ENCODE measurements at regions of chr15 and their contacts with region 1.

Region 1: GRCh38 chr15:85485956-85486567 is 105.7 kb downstream of the AKAP13 start:
- DNase-seq: peak; percentile 75
- ATAC-seq: peak; percentile 88
- H3K4me3 ChIP-seq: no peak overlapping the region
- H3K27ac ChIP-seq: no peak overlapping the region
- H3K4me1 ChIP-seq: peaks cover 17% of the 10 kb centered on the region; the same call in 1 of the 2 replicates
- H3K27me3 ChIP-seq: no peaks in the 10 kb centered on the region
- CTCF ChIP-seq: peak; percentile 77
- EP300 ChIP-seq: no peak
- POLR2A ChIP-seq: no peak
- RAD21 ChIP-seq: peak; percentile 50; the same call in 1 of the 2 replicates

Region 2: DNA sequence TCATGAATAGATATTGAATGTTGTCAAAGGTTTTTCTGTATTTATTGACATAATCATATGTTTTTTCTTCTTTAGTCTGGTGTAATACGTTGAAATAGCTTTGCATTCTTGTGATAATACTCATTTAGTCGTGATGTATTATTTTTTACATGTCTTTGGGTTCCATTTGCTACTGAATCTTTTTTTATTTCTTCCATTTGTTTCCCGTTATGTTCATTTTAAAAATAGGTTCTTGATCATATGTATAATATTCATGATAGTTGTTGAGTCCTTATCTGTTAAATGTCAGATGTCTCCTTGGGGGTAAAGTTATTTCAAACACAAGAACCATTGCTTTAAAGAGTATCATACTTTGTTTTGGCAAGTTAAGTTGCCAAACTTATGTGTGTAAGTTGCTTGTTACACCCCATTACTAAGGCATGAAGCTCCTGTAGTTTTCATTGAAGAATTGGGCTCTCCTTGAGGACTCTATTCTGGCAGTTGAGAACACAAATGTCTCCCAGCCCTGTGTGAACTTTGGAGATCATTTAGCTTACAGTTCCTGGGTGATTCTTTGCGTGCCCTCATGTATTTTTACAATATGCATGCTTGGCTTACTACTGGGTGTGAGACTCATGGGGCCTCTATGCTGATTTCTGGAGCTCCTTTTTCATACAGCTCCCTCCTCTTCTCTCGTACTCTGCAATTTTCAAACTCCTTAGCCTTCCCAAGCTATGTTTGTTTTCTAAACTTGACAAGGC is 97.3 kb before region 1 on chr15:
- CTCF ChIA-PET with region 1: no interaction called
- POLR2A ChIA-PET with region 1: no interaction called
- in situ Hi-C with region 1: no loop called
- intact Hi-C with region 1: no loop called
- DNase-seq: no peak
- ATAC-seq: no peak
- H3K4me3 ChIP-seq: no peak overlapping the region
- H3K27ac ChIP-seq: no peak overlapping the region
- H3K4me1 ChIP-seq: peaks cover 38% of the 10 kb centered on the region
- H3K27me3 ChIP-seq: no peaks in the 10 kb centered on the region
- CTCF ChIP-seq: no peak
- EP300 ChIP-seq: no peak
- POLR2A ChIP-seq: no peak
- RAD21 ChIP-seq: no peak

Region 3: GRCh38 chr15:85504749-85505676 is 19.0 kb after region 1 on chr15:
- CTCF ChIA-PET with region 1: interaction called, 4 read pairs
- POLR2A ChIA-PET with region 1: no interaction called
- in situ Hi-C with region 1: no loop called
- intact Hi-C with region 1: loop called (anchors 2 kb)
- DNase-seq: peak; percentile 53
- ATAC-seq: peak; percentile 62; the same call in 2 of the 3 replicates
- H3K4me3 ChIP-seq: no peak overlapping the region
- H3K27ac ChIP-seq: no peak overlapping the region
- H3K4me1 ChIP-seq: peaks cover 8% of the 10 kb centered on the region; the same call in 1 of the 2 replicates
- H3K27me3 ChIP-seq: no peaks in the 10 kb centered on the region; a peak in 1 of 5 replicates
- CTCF ChIP-seq: peak; percentile 55
- EP300 ChIP-seq: no peak
- POLR2A ChIP-seq: no peak
- RAD21 ChIP-seq: no peak

Region 4: DNA sequence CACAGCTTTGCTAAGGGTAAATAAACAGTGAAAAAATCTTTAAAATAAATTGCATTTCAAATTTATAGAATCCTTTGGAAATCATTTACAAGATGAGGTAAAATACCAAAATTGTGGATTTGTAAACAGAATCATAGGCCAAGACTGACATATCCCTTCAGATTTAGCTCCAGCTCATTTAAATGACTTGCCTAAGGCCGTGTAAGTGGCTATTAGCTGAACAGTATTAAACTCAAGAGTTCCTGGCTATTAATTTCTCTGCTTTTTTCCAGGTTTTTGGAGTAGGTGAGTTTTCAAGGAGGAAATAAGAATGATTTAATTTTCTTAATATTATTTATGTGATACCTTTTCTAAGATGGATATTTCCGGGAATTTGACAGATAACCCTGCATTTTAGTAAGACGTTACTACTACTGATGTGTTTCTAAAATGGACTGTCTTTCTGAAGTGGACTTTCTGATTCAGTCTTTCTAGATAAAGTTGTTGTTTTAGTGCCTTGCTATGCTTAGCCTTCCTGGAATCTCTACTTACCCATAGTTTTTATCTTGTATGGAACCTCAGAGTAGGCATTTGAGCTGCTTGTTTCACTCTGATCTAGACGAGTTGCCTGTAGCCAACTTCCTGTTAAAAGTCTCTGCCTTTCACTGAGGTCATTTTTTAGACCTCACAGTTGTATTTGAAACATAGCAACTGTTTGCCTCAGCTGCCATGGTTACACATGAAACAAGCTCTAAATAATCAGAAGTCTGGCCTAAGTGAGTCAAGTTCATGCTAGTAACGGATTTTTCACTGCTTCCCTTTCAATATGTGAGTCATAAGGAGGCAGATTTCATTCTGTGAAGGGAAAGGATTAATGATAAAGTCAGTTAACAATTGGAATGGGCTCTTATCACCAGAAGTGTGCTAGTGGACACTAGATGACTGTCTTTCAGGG is 181.7 kb after region 1 on chr15:
- CTCF ChIA-PET with region 1: no interaction called
- POLR2A ChIA-PET with region 1: no interaction called
- in situ Hi-C with region 1: no loop called
- intact Hi-C with region 1: no loop called
- DNase-seq: peak; percentile 53
- ATAC-seq: peak; percentile 68
- H3K4me3 ChIP-seq: no peak overlapping the region
- H3K27ac ChIP-seq: peak overlapping the region; percentile 57
- H3K4me1 ChIP-seq: peaks cover 19% of the 10 kb centered on the region
- H3K27me3 ChIP-seq: no peaks in the 10 kb centered on the region
- CTCF ChIP-seq: no peak
- EP300 ChIP-seq: no peak
- POLR2A ChIP-seq: no peak
- RAD21 ChIP-seq: no peak